Dorsolateral prefrontal cortex (tissue), 120 donors: ENCODE measurements at regions of chr7 and their contacts with region 1.

Region 1: DNA sequence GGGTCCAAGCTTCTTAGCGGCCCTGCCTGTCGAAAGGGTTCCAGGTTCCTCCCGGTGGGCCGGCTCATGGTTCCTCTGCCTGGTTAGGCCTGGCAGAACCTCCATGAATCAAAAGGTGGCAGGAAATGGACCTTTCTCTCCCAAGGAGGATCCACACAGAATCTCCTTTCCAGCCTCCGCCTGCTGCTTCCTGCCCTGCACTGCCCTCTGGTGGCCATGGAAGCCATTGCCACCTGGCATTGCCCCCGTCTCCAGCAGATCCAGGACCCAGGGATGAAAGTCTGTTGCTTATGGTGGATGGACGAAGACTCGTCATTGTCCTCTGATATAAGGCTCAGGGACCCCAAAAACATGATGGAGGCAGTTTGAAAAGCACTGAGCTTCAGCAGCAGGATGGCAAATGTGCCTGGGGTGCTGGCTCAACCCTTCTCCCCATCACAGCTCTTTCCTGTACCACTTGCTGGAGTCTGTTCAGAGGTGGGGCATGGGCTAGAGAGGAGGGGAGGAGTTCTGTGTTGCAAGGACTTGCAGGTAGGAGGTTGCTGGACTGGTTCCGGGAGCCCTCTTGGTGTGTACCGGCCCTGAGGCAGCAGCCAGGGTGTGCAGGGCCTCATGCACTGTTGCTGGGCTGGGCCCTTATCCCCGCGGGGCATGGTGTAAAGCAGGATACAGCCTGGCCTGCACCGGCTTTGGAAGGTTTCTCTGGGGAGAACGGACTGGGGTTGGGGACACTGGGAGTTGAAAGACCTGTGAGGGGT is 11.3 kb upstream of the INMT start:
- DNase-seq: peak in 9 of 10 donors; percentile 68 to 86 (median 73)
- H3K4me3 ChIP-seq: no peak overlapping the region
- H3K27ac ChIP-seq: no peak overlapping the region
- H3K27me3 ChIP-seq: no peaks in the 10 kb centered on the region
- CTCF ChIP-seq: peak; percentile 75 to 99 (median 95)

Region 2: GRCh38 chr7:30548762-30549344 is 191.8 kb before region 1 on chr7:
- intact Hi-C with region 1: loop called in 1 of 2 experiments (anchors 5 kb)
- DNase-seq: peak; percentile 53 to 89 (median 78)
- H3K4me3 ChIP-seq: peak overlapping the region in 10 of 59 donors; percentile 3 to 36 (median 12)
- H3K27ac ChIP-seq: peak overlapping the region in 57 of 59 donors; percentile 5 to 88 (median 73)
- H3K27me3 ChIP-seq: no peaks in the 10 kb centered on the region
- CTCF ChIP-seq: peak; percentile 75 to 98 (median 92)